ENCODE measurements at regions of chr1 and their contacts with region 1.

Region 1: GRCh38 chr1:25204797-25205480 is 27.4 kb downstream of the SYF2 start:
- DNase-seq: peak in 1 of 2 experiments; percentile 15
- H3K4me3 ChIP-seq: no peak overlapping the region
- H3K27ac ChIP-seq: no peak overlapping the region
- H3K4me1 ChIP-seq: no peaks in the 10 kb centered on the region
- H3K27me3 ChIP-seq: 0 out of 2 replicates have a peak, but pooled peaks cover 3% of the 10 kb centered on the region
- CTCF ChIP-seq: peak; percentile 78

Region 2: GRCh38 chr1:24930204-24931145 is 274.5 kb before region 1 on chr1 and contains the start of gene RUNX3:
- CTCF ChIA-PET with region 1: no interaction called
- POLR2A ChIA-PET with region 1: no interaction called
- intact Hi-C with region 1: no loop called
- DNase-seq: no peak
- H3K4me3 ChIP-seq: no peak within 1 kb of the TSS
- H3K27ac ChIP-seq: no peak within 1 kb of the TSS
- H3K4me1 ChIP-seq: no peaks in the 10 kb centered on the region
- H3K27me3 ChIP-seq: peaks cover 28% of the 10 kb centered on the region
- CTCF ChIP-seq: no peak
- total RNA-seq, gene RUNX3: not detected in 2 replicates

Region 3: DNA sequence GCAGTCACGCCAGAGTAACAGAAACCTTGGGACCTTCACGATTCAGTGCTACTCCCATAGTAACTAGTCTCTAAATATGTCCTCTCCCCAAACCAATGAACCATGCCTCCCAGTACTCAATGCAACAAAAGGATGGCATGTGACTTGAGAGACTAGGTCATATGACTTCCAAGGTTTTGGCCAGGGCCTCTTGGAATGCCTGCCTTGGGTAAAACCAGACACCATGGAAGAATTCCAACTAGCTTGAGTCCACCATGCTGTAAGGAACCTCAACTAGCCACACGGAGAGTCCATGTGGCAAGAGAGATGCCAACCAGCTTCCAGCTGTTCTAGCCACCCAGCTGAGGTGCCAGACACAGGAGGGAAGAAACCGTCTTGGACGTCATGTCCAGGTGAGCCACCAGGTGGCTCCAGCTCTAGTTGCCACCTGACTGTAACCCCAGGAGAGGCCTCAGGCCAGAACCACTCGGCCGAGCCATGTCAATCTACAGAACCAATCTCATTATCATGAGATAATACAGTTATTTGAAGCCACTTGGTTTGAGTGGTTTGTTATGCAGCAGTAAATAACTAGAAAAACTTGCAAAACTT is 87.6 kb before region 1 on chr1:
- CTCF ChIA-PET with region 1: no interaction called
- POLR2A ChIA-PET with region 1: no interaction called
- intact Hi-C with region 1: loop called (anchors 10 kb)
- DNase-seq: peak in 1 of 2 experiments; percentile 20
- H3K4me3 ChIP-seq: no peak overlapping the region
- H3K27ac ChIP-seq: no peak overlapping the region
- H3K4me1 ChIP-seq: no peaks in the 10 kb centered on the region
- H3K27me3 ChIP-seq: peaks cover 16% of the 10 kb centered on the region; the same call in 1 of the 2 replicates
- CTCF ChIP-seq: peak; percentile 53

Region 4: GRCh38 chr1:25167331-25168199 is 37.4 kb before region 1 on chr1:
- CTCF ChIA-PET with region 1: no interaction called
- POLR2A ChIA-PET with region 1: no interaction called
- intact Hi-C with region 1: no loop called
- DNase-seq: peak in 1 of 2 experiments; percentile 30
- H3K4me3 ChIP-seq: no peak overlapping the region
- H3K27ac ChIP-seq: no peak overlapping the region
- H3K4me1 ChIP-seq: no peaks in the 10 kb centered on the region
- H3K27me3 ChIP-seq: no peaks in the 10 kb centered on the region
- CTCF ChIP-seq: no peak

Region 5: DNA sequence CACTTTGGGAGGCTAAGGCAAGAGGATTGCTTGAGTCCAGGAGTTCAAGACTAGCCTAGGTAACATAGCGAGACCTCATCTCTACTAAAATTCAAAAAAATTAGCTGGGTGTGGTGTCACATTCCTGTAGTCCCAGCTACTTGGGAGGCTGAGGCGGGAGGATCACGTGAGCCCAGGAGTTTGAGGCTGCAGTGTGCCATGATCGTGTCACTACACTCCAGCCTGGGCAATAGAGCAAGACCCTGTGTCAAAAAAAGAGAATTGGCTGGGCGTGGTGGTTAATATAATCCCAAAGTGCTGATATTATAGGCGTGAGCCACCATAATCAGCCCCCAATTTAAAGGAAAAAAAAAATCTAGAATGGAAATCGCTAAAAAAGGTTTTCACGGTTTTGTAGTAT is 232.7 kb after region 1 on chr1:
- CTCF ChIA-PET with region 1: interaction called, 13 read pairs
- POLR2A ChIA-PET with region 1: no interaction called
- intact Hi-C with region 1: no loop called
- DNase-seq: no peak
- H3K4me3 ChIP-seq: no peak overlapping the region
- H3K27ac ChIP-seq: no peak overlapping the region
- H3K4me1 ChIP-seq: peaks cover under 1% of the 10 kb centered on the region; the same call in 1 of the 2 replicates
- H3K27me3 ChIP-seq: no peaks in the 10 kb centered on the region
- CTCF ChIP-seq: no peak